Testis (tissue), 5 donors: ENCODE measurements at regions of chr19 and their contacts with region 1.

Region 1: DNA sequence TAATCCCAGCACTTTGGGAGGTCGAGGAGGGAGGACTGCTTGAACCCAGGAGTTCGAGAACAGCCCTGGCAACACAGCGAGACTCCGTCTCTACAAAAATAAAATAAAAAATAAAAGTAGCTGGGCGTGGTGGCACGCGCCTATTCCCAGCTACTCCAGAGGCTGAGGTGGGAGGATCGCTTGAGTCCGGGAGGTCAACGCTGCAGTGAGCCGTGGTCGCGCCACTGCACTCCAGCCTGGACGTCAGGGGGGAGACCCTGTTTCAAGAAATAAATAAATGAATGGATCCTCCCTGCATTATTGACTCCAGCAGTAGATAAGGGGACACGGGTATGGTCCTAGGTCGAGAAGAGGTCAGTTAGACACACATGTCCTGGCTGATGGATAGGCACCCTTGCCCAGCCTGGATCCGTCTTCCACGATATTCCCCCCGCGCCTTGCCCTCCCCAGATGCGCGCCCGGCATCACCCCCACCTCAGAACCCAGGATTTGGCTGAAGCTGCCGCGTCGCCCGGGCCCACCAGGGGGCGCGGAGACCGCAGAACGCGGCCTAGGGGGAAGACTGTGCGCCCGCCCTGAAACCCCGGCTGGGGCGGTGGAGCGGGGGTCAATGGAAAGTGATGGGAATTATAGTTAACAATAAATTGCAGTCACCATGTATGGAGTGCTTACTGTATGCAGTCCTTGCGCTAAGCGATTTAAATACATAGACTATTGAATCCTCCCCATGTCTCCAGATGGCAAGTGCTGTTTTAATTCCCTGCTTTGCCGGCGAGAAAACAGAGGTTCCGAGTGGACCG is 2.1 kb upstream of the HOOK2 start:
- DNase-seq: peak; percentile 82
- H3K4me3 ChIP-seq: peak overlapping the region; percentile 54 to 68
- H3K27ac ChIP-seq: peak overlapping the region; percentile 93 to 95
- H3K4me1 ChIP-seq: peaks cover 34% of the 10 kb centered on the region
- H3K27me3 ChIP-seq: no peaks in the 10 kb centered on the region
- CTCF ChIP-seq: peak; percentile 92 to 95 (median 94)
- POLR2A ChIP-seq: no peak

Region 2: DNA sequence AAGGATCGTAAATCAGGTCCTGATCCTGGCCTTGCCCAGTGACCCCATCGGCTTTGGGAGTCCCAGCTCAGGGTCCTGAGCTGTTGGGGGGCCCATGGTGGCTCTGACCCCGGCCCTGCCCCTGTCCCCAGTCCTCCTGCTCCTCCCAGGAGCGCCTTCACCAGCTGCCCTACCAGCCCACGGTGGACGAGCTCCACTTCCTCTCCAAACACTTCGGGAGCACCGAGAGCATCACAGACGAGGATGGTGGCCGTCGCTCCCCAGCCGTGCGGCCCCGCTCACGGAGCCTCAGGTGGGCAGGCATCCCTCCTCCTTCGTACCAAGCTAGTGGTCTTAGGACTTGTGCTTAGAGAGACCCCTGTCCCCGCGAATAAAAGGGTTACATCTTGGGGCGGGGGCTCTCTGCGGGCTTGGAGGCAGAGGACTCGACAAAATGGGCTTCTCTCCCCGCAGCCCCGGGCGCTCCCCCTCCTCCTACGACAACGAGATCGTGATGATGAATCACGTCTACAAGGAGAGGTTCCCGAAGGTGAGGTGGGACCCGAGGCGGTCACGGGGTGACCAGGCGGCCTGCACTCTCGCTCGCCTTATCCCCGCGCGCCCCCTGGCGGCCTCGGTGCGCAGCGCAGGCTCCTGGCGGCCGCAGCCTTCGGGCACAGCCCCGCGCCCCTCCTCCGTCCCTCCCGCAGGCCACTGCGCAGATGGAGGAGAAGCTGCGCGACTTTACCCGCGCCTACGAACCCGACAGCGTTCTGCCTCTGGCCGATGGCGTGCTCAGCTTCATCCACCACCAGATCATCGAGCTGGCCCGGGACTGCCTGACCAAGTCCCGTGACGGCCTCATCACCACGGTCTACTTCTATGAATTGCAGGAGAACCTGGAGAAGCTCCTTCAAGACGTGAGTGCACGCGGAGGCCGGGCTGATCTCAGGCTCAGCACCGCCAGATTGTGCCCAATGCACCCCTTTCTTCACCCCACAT is 70.0 kb after region 1 on chr19:
- intact Hi-C with region 1: loop called (anchors 10 kb)
- DNase-seq: peak; percentile 90
- H3K4me3 ChIP-seq: peak overlapping the region in 1 of 2 donors; percentile 18
- H3K27ac ChIP-seq: no peak overlapping the region
- H3K4me1 ChIP-seq: peaks cover 8% of the 10 kb centered on the region
- H3K27me3 ChIP-seq: no peaks in the 10 kb centered on the region
- CTCF ChIP-seq: peak; percentile 97 to 98 (median 97)
- POLR2A ChIP-seq: no peak